ENCODE measurements at regions of chr10 and their contacts with region 1.

Region 1: DNA sequence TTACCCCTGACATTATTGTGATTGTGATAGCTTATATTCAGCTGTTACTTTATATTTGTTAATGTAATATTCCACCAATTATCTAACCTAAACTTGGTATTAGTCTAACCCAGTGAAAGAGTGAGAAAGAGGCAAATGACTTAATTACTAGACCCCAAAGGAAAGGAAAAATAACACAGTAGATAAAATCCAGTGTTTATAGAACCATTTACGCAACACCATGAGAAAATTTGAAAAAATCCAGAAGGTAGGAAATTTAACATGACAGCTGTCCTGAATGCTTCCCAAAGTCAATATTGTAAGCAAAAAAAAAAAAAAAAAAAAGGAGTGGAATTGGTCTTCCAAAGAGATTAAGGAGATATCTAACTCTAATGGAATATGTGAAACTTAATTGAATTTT is 741.5 kb upstream of the GHITM start:
- DNase-seq: no peak

Region 2: GRCh38 chr10:83332690-83333089 is 65.1 kb before region 1 on chr10:
- intact Hi-C with region 1: no loop called
- DNase-seq: no peak

Region 3: DNA sequence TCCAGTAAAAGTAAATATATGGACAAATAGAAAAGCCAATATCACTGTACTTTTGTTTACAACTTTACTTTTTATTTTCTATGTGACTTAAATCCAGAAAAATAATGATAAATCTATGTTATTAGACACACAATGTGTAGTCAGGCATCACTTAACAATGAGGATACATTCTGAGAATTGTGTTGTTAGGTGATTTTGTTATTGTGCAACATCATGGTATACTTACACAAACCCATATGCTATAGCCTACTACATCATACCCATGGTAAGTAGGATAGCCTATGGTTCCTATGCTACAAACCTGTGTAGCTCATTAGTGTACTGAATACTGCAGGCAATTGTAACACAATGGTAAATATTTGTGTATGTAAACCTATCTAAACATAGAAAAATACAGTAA is 40.2 kb before region 1 on chr10:
- intact Hi-C with region 1: no loop called
- DNase-seq: no peak

Region 4: GRCh38 chr10:83373671-83374070 is 24.1 kb before region 1 on chr10:
- intact Hi-C with region 1: loop called in 1 of 2 experiments (anchors 1 kb)
- DNase-seq: no peak